Left colon (tissue), 2 donors: ENCODE measurements at regions of chr13 and their contacts with region 1.

Region 1: DNA sequence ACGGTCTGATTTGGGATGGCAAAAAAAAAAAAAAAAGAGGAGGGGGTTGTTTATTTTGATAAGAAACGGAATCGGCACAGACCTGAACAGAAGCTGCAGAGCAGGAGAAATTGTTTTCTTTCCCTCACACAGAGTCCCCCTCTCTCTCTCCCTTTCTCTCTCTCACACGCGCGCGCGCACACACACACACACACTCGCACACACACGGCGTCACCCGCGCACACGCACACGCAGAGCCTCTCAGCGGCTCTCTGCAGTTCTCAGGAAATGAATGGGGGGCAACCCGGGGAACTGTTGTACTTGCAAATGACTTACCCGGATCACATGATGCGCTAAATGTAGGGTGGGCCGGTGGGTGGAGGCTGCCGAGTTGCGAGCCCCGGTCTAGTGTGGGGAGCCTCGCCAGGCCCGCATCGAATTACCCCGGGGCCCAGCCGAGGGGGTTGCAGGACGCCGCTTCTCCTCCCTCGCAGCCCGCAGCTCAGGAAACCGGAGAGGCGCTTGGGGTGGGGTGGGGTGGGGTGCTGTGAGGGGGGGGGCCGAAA is 475 bp downstream of the KLF12 start:
- DNase-seq: peak; percentile 79 to 90
- ATAC-seq: peak; percentile 31

Region 2: DNA sequence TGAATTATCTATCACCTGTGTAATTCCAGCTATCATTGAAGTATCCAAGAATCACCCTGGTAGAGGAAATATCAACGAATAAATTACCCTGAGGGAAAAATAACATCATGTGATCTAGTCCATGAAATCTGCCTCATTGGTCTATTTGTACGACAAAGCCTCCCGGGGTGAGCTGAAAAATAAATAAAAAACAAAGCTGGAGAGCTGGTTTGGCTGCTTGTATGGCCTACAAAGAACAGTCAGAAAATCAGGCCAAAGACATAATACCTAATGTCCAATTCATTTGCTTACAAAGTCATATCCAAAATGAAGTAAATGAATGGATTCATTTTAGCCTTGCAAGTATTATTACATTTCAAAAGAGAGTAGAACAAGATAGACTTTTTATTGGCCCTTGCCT is 449.4 kb before region 1 on chr13:
- intact Hi-C with region 1: no loop called
- DNase-seq: no peak
- ATAC-seq: no peak

Region 3: GRCh38 chr13:73943137-73943964 is 190.4 kb before region 1 on chr13:
- intact Hi-C with region 1: loop called in 1 of 2 experiments (anchors 10 kb)
- DNase-seq: no peak
- ATAC-seq: no peak

Region 4: GRCh38 chr13:74287724-74288169 is 154.0 kb after region 1 on chr13:
- intact Hi-C with region 1: loop called in 1 of 2 experiments (anchors 5 kb)
- DNase-seq: peak; percentile 79 to 88
- ATAC-seq: peak; percentile 80